ENCODE measurements at regions of chr5 and their contacts with region 1.

Region 1: GRCh38 chr5:149694007-149694406 is 36.1 kb upstream of the PPARGC1B start:
- DNase-seq: no peak
- H3K4me3 ChIP-seq: no peak overlapping the region
- H3K4me3 Mint-ChIP-seq: no peak overlapping the region
- H3K27ac ChIP-seq: no peak overlapping the region
- H3K27ac Mint-ChIP-seq: no peak overlapping the region
- H3K4me1 ChIP-seq: peaks cover under 1 to 16% of the 10 kb centered on the region in 2 donors
- H3K4me1 Mint-ChIP-seq: peaks cover 29% of the 10 kb centered on the region
- H3K27me3 ChIP-seq: no peaks in the 10 kb centered on the region
- H3K27me3 Mint-ChIP-seq: peaks cover 1 to 8% (median 2%) of the 10 kb centered on the region in 3 donors
- CTCF ChIP-seq: no peak

Region 2: DNA sequence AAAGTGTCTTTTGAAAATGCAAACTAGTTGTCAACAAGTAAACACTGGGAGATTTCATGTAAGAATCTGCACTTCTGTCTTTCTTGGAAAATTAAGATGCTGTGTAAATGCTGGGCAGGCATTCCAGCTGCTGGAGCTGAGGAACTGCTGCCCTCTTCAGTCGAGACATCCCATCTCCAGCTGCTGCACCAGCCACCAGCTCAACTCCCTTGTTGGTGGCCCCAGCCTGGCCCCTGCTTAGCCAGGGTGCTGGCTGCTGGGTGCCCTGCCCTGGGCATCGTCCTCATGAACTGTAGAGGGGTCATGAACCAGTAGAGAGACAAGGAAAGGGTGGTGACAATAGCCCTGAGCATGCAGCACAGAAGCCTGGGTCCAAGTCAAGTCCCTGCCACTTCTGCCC is 455.4 kb before region 1 on chr5:
- intact Hi-C with region 1: no loop called
- DNase-seq: no peak
- H3K4me3 ChIP-seq: no peak overlapping the region
- H3K4me3 Mint-ChIP-seq: no peak overlapping the region
- H3K27ac ChIP-seq: no peak overlapping the region
- H3K27ac Mint-ChIP-seq: no peak overlapping the region
- H3K4me1 ChIP-seq: peaks cover 7 to 13% of the 10 kb centered on the region in 2 donors
- H3K4me1 Mint-ChIP-seq: peaks cover 10% of the 10 kb centered on the region
- H3K27me3 ChIP-seq: no peaks in the 10 kb centered on the region
- H3K27me3 Mint-ChIP-seq: peaks cover 5 to 30% (median 5%) of the 10 kb centered on the region in 3 donors
- CTCF ChIP-seq: no peak

Region 3: DNA sequence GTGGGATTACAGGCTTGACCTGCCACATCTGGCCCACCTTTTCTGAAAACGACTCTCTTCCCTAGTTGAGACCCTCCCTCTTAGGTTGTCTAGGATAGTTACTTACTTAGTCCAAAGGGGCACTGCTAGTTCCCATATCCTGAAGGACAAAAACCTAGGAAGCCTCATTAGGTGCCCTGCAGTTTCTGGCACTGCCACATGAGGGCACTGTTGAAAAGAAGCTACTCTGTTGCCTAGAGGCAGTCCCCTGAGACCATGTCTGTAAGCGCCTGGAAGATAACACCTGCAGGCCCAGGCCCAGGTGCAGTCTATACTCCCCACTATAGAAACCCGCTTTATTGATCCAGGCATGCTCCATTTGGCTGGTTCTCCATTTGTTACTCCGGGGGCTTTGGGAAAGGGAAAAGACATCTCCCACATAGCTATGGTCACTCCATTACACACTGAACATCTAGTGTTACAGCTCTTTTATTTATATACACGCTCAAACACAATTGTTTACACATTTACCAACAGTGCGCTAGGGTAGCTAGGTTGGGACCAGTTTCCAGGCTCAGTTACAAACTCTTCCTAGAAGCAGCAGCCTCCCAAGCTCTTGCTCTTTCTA is 37.3 kb before region 1 on chr5:
- intact Hi-C with region 1: loop called in 1 of 2 experiments (anchors 5 kb)
- DNase-seq: peak in 2 of 3 donors; percentile 54 to 72
- H3K4me3 ChIP-seq: no peak overlapping the region
- H3K4me3 Mint-ChIP-seq: no peak overlapping the region
- H3K27ac ChIP-seq: no peak overlapping the region
- H3K27ac Mint-ChIP-seq: no peak overlapping the region
- H3K4me1 ChIP-seq: no peaks in the 10 kb centered on the region
- H3K4me1 Mint-ChIP-seq: peaks cover 3% of the 10 kb centered on the region
- H3K27me3 ChIP-seq: no peaks in the 10 kb centered on the region
- H3K27me3 Mint-ChIP-seq: peaks cover 0 to 4% (median 0%) of the 10 kb centered on the region in 3 donors
- CTCF ChIP-seq: peak; percentile 96

Measured in CD14-positive monocyte (primary cell).